B cell (primary cell): ENCODE measurements at regions of chr9 and their contacts with region 1.

Region 1: GRCh38 chr9:123225374-123225813 is 43.0 kb downstream of the STRBP start:
- DNase-seq: peak; percentile 86
- ATAC-seq: peak; percentile 92
- H3K4me3 ChIP-seq: no peak overlapping the region
- H3K4me3 Mint-ChIP-seq: peak overlapping the region; percentile 64
- H3K27ac ChIP-seq: peak overlapping the region; percentile 46 to 77
- H3K27ac Mint-ChIP-seq: peak overlapping the region; percentile 79
- H3K4me1 ChIP-seq: peaks cover 65 to 68% of the 10 kb centered on the region in 2 donors
- H3K4me1 Mint-ChIP-seq: peaks cover 55% of the 10 kb centered on the region
- H3K27me3 ChIP-seq: no peaks in the 10 kb centered on the region
- H3K27me3 Mint-ChIP-seq: no peaks in the 10 kb centered on the region
- CTCF ChIP-seq: peak; percentile 72

Region 2: GRCh38 chr9:123091459-123091858 is 133.9 kb before region 1 on chr9:
- CTCF ChIA-PET with region 1: interaction called, 16 read pairs
- POLR2A ChIA-PET with region 1: no interaction called
- intact Hi-C with region 1: no loop called
- DNase-seq: no peak
- ATAC-seq: no peak
- H3K4me3 ChIP-seq: no peak overlapping the region
- H3K4me3 Mint-ChIP-seq: no peak overlapping the region
- H3K27ac ChIP-seq: no peak overlapping the region
- H3K27ac Mint-ChIP-seq: peak overlapping the region; percentile 44
- H3K4me1 ChIP-seq: peaks cover 46 to 52% of the 10 kb centered on the region in 2 donors
- H3K4me1 Mint-ChIP-seq: peaks cover 76% of the 10 kb centered on the region
- H3K27me3 ChIP-seq: no peaks in the 10 kb centered on the region
- H3K27me3 Mint-ChIP-seq: no peaks in the 10 kb centered on the region
- CTCF ChIP-seq: no peak

Region 3: DNA sequence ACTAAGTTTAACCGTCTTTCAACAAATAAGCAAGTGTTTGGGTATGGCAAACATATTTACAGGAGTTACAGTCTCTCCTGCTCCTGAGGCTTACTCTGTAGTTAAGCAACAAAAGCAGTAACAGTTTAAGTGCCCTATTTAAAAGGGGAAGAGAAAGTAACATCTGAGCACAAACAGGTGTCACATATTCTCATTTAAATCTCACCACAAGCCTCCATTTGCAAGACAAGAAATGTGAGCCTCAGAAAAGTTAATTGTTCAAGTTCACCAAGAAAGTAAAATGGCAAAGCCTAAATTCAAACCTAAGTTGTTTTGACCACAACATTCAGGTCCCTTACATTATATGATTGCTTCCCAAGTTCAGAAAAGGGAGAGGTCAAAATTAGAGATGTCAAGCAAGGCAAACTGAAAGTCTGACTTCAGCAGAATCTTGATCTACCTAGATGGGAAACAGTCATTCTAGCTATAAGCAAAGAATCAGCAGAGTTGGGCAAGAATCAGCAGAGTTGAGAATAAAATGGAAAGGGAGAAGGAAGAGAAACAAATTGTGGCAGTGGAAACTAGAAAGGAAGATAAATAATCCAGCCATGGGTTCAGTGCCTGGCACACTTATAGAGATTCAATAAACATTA is 50.4 kb before region 1 on chr9:
- CTCF ChIA-PET with region 1: interaction called, 5 read pairs
- POLR2A ChIA-PET with region 1: no interaction called
- intact Hi-C with region 1: loop called (anchors 2 kb)
- DNase-seq: peak; percentile 83
- ATAC-seq: peak; percentile 91
- H3K4me3 ChIP-seq: peak overlapping the region in 1 of 5 experiments; percentile 53
- H3K4me3 Mint-ChIP-seq: peak overlapping the region; percentile 76
- H3K27ac ChIP-seq: peak overlapping the region; percentile 85 to 96
- H3K27ac Mint-ChIP-seq: peak overlapping the region; percentile 93
- H3K4me1 ChIP-seq: peaks cover 50 to 54% of the 10 kb centered on the region in 2 donors
- H3K4me1 Mint-ChIP-seq: peaks cover 74% of the 10 kb centered on the region
- H3K27me3 ChIP-seq: no peaks in the 10 kb centered on the region
- H3K27me3 Mint-ChIP-seq: no peaks in the 10 kb centered on the region
- CTCF ChIP-seq: no peak

Region 4: DNA sequence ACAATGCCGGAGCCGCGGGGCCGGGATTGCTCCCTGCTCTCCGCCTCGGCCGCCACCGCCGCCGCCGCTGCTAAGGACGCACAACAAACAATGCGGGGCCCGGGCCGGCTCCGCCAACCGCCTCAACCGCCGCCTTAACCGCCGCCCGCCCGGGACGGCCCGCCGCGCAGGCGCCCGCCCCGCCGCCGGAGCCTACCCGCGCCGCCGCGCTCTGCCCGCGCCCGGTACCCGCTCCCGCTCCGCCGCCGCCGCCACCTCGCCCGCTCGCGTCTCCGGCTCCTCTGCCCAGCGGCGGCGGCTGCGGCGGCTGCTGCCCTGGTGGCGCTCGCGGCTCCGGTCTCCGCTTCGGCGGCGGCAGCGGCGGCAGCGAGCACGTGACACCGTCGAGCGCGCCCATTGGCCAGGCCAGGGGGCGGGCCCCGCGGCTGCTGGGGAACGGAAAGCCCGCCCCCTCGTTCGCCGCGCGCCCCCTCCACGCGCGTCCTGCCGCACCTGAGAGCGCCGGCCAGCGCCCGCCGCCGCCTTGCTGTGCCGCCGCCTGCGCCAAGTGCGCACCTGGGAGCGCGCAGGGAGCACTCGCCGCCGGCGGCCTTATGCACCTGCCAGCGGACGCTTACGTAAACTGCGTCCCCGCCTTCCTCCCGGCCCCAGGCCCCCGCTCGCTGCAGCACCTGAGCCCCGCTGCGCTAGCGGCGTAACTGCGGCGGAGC is 43.0 kb after region 1 on chr9 and contains the start of gene STRBP:
- CTCF ChIA-PET with region 1: interaction called, 5 read pairs
- POLR2A ChIA-PET with region 1: interaction called, 6 read pairs
- intact Hi-C with region 1: loop called (anchors 2 kb)
- DNase-seq: peak; percentile 99
- ATAC-seq: peak; percentile 91
- H3K4me3 ChIP-seq: peak within 1 kb of the TSS; percentile 55 to 95 (median 79)
- H3K4me3 Mint-ChIP-seq: peak within 1 kb of the TSS; percentile 91
- H3K27ac ChIP-seq: peak within 1 kb of the TSS; percentile 84 to 93
- H3K27ac Mint-ChIP-seq: peak within 1 kb of the TSS; percentile 89
- H3K4me1 ChIP-seq: peaks cover 41 to 51% of the 10 kb centered on the region in 2 donors
- H3K4me1 Mint-ChIP-seq: peaks cover 46% of the 10 kb centered on the region
- H3K27me3 ChIP-seq: no peaks in the 10 kb centered on the region
- H3K27me3 Mint-ChIP-seq: no peaks in the 10 kb centered on the region
- CTCF ChIP-seq: no peak
- total RNA-seq, gene STRBP: 189 and 197 TPM in 2 replicates

Region 5: GRCh38 chr9:123282362-123283047 is 57.1 kb after region 1 on chr9:
- CTCF ChIA-PET with region 1: no interaction called
- POLR2A ChIA-PET with region 1: no interaction called
- intact Hi-C with region 1: no loop called
- DNase-seq: no peak
- ATAC-seq: no peak
- H3K4me3 ChIP-seq: no peak overlapping the region
- H3K4me3 Mint-ChIP-seq: no peak overlapping the region
- H3K27ac ChIP-seq: no peak overlapping the region
- H3K27ac Mint-ChIP-seq: no peak overlapping the region
- H3K4me1 ChIP-seq: peaks cover 0 to 6% of the 10 kb centered on the region in 2 donors
- H3K4me1 Mint-ChIP-seq: peaks cover 4% of the 10 kb centered on the region
- H3K27me3 ChIP-seq: no peaks in the 10 kb centered on the region
- H3K27me3 Mint-ChIP-seq: no peaks in the 10 kb centered on the region
- CTCF ChIP-seq: no peak

Region 6: DNA sequence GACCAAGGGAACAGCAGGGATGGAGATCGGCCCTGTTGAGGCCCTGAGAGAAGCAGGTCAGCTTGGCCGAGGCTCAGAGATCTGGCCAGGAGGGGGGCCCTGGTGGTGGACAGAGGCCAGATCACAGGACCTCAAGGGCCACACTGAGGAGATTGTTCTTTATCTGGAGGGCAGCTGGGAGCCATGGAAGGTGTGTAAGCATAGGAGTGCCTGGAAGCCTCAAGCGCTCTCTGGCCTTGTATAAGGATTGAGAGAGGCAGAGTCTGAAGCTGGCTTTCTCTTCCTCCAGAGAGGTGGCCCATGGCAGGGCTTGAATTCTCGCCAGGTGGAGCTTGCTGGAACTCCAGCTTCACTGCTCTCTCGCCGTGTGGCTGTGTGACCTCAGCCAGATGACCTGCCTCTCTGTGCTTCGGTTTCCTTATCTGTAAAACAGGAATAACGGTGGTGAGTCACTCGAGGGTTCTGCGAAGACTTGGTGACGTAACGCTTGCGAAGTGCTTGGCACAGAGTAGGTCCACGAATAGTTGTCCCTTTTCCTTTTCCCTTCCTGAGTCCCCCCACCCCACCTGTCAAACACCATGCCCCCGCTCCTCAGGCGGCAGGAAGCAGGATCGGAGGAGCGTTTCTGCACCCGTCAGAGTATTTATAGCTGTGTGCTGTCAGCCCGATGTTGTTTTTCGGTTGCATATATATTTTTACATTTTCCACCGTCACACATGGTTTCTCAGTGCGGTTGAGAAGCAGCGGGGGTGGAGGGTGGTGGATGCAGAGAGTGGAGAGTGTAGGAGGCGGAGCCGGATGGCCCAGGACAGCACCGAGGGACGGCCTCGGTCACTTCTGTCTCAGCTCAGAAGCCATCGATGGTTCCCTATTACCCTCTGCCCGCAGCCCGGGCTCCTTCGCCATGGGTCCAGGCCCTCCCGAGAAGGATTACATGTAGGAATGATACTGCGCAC is 113.6 kb after region 1 on chr9:
- CTCF ChIA-PET with region 1: interaction called, 10 read pairs
- POLR2A ChIA-PET with region 1: interaction called, 3 read pairs
- intact Hi-C with region 1: loop called (anchors 1 kb)
- DNase-seq: peak; percentile 90
- ATAC-seq: peak; percentile 58
- H3K4me3 ChIP-seq: peak overlapping the region in 4 of 5 experiments; percentile 30 to 46 (median 45)
- H3K4me3 Mint-ChIP-seq: peak overlapping the region; percentile 94
- H3K27ac ChIP-seq: peak overlapping the region; percentile 98 to 99
- H3K27ac Mint-ChIP-seq: peak overlapping the region; percentile 100
- H3K4me1 ChIP-seq: peaks cover 99 to 100% of the 10 kb centered on the region in 2 donors
- H3K4me1 Mint-ChIP-seq: peaks cover 96% of the 10 kb centered on the region
- H3K27me3 ChIP-seq: no peaks in the 10 kb centered on the region
- H3K27me3 Mint-ChIP-seq: no peaks in the 10 kb centered on the region
- CTCF ChIP-seq: no peak

Region 7: GRCh38 chr9:123434619-123435528 is 209.5 kb after region 1 on chr9:
- CTCF ChIA-PET with region 1: no interaction called
- POLR2A ChIA-PET with region 1: no interaction called
- intact Hi-C with region 1: no loop called
- DNase-seq: no peak
- ATAC-seq: no peak
- H3K4me3 ChIP-seq: no peak overlapping the region
- H3K4me3 Mint-ChIP-seq: no peak overlapping the region
- H3K27ac ChIP-seq: no peak overlapping the region
- H3K27ac Mint-ChIP-seq: no peak overlapping the region
- H3K4me1 ChIP-seq: no peaks in the 10 kb centered on the region
- H3K4me1 Mint-ChIP-seq: no peaks in the 10 kb centered on the region
- H3K27me3 ChIP-seq: no peaks in the 10 kb centered on the region
- H3K27me3 Mint-ChIP-seq: no peaks in the 10 kb centered on the region
- CTCF ChIP-seq: no peak

Region 8: DNA sequence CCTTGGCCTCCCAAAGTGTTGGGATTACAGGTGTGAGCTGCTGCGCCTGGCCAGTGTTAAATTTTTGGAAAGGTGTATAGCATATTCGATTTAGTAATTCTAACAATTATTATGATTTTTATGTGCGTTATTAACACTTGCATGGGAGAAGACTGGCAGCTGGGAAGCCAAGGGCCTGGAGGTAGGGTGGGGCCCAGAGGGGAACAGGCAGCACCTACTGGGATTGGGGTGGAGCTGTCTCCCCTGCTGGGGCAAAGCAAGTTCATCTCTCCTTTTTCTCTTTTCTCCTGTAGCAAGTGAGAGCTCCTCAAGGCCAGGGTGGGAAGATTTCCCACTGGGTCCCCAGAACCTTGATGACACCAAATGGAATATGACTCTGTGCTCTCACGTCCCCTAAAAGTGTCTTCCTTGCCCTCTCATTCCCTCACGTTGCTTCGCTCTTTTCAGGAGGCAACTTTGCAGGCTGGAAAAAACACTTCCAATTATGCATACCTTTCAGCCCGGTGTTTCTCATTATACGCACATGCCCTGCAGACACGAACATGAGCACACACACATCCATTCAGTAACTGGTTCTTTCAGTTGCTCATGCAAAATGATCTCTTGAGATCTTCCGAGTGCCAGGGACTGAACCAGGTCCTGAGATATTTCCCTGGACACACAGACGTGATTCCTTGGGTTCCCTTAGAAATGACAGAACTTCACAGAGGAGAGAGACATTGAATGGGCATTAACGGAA is 763.1 kb after region 1 on chr9:
- CTCF ChIA-PET with region 1: no interaction called
- POLR2A ChIA-PET with region 1: no interaction called
- intact Hi-C with region 1: no loop called
- DNase-seq: no peak
- ATAC-seq: no peak
- H3K4me3 ChIP-seq: no peak overlapping the region
- H3K4me3 Mint-ChIP-seq: no peak overlapping the region
- H3K27ac ChIP-seq: no peak overlapping the region
- H3K27ac Mint-ChIP-seq: no peak overlapping the region
- H3K4me1 ChIP-seq: no peaks in the 10 kb centered on the region
- H3K4me1 Mint-ChIP-seq: no peaks in the 10 kb centered on the region
- H3K27me3 ChIP-seq: peaks cover 0 to 18% (median 2%) of the 10 kb centered on the region in 4 experiments
- H3K27me3 Mint-ChIP-seq: peaks cover 29% of the 10 kb centered on the region
- CTCF ChIP-seq: no peak